Sigmoid colon (tissue), 7 donors: ENCODE measurements at regions of chr6 and their contacts with region 1.

Region 1: DNA sequence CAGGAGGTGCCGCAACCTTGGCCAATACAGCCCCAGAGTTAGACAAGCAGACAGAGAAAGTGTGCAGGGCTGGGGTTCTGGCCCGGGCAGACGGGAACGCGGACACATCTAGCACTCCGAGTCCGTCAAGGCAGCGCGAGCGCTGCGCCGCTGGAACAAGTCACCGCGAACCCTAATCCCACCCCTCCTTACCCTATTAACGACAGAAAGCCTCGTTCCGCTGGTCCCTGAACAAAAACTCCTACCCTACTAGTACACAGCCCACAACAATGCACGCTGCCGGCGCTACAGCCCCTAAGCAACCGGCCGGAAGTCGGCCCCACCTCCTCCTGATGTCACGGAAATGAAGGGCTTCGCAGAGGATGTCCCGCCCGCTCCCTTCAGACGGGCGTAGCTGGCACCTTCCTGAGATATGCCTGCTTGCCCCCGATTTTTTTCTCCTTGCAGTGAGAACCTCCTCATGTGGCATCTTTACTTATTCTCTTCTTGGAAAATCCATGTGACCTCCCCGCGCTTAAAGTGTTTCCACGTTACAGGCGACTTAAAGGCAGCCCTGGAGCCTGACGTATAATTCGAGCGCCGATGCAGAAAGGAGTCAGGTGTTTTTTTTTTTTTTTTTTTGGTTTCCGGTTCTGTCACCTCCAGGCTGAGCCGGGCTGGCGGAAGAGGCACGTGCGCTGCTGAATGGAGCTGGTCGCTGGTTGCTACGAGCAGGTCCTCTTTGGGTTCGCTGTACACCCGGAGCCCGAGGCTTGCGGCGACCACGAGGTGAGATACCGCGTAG is at the starts of genes C6orf52 and PAK1IP1:
- DNase-seq: peak; percentile 97
- H3K4me3 ChIP-seq: peak within 1 kb of the TSS; percentile 73 to 93 (median 78)
- H3K27ac ChIP-seq: peak within 1 kb of the TSS; percentile 89 to 97 (median 90)
- H3K4me1 ChIP-seq: peaks cover 0 to 31% (median 27%) of the 10 kb centered on the region in 4 donors
- H3K27me3 ChIP-seq: no peaks in the 10 kb centered on the region
- CTCF ChIP-seq: no peak
- EP300 ChIP-seq: peak in 2 of 4 donors; percentile 6 to 38
- POLR2A ChIP-seq: peak; percentile 92 to 93
- total RNA-seq, gene C6orf52: not detected
- total RNA-seq, gene PAK1IP1: 6.6 to 14.6 (median 11.8) TPM

Region 2: GRCh38 chr6:10510592-10511367 is 183.7 kb before region 1 on chr6:
- intact Hi-C with region 1: loop called (anchors 1 kb)
- DNase-seq: peak; percentile 84
- H3K4me3 ChIP-seq: peak overlapping the region in 3 of 4 donors; percentile 5 to 29 (median 19)
- H3K27ac ChIP-seq: peak overlapping the region; percentile 59 to 75 (median 70)
- H3K4me1 ChIP-seq: peaks cover 0 to 17% (median 10%) of the 10 kb centered on the region in 4 donors
- H3K27me3 ChIP-seq: no peaks in the 10 kb centered on the region
- CTCF ChIP-seq: peak; percentile 47 to 75 (median 56)
- EP300 ChIP-seq: no peak
- POLR2A ChIP-seq: no peak

Region 3: GRCh38 chr6:10626154-10626741 is 68.2 kb before region 1 on chr6:
- intact Hi-C with region 1: loop called (anchors 5 kb)
- DNase-seq: no peak
- H3K4me3 ChIP-seq: no peak overlapping the region
- H3K27ac ChIP-seq: peak overlapping the region in 2 of 4 donors; percentile 29 to 36
- H3K4me1 ChIP-seq: peaks cover 0 to 19% (median 11%) of the 10 kb centered on the region in 4 donors
- H3K27me3 ChIP-seq: no peaks in the 10 kb centered on the region
- CTCF ChIP-seq: no peak
- EP300 ChIP-seq: no peak
- POLR2A ChIP-seq: no peak

Region 4: GRCh38 chr6:10722820-10723566 is 28.5 kb after region 1 on chr6 and contains the start of gene TMEM14C:
- intact Hi-C with region 1: loop called (anchors 2 kb)
- DNase-seq: peak; percentile 100
- H3K4me3 ChIP-seq: peak within 1 kb of the TSS; percentile 74 to 85 (median 79)
- H3K27ac ChIP-seq: peak within 1 kb of the TSS; percentile 91 to 94 (median 93)
- H3K4me1 ChIP-seq: peaks cover 0 to 36% (median 28%) of the 10 kb centered on the region in 4 donors
- H3K27me3 ChIP-seq: no peaks in the 10 kb centered on the region
- CTCF ChIP-seq: no peak
- EP300 ChIP-seq: peak in 1 of 4 donors; percentile 15
- POLR2A ChIP-seq: peak; percentile 80 to 87
- total RNA-seq, gene TMEM14C: 115 to 199 (median 170) TPM

Region 5: DNA sequence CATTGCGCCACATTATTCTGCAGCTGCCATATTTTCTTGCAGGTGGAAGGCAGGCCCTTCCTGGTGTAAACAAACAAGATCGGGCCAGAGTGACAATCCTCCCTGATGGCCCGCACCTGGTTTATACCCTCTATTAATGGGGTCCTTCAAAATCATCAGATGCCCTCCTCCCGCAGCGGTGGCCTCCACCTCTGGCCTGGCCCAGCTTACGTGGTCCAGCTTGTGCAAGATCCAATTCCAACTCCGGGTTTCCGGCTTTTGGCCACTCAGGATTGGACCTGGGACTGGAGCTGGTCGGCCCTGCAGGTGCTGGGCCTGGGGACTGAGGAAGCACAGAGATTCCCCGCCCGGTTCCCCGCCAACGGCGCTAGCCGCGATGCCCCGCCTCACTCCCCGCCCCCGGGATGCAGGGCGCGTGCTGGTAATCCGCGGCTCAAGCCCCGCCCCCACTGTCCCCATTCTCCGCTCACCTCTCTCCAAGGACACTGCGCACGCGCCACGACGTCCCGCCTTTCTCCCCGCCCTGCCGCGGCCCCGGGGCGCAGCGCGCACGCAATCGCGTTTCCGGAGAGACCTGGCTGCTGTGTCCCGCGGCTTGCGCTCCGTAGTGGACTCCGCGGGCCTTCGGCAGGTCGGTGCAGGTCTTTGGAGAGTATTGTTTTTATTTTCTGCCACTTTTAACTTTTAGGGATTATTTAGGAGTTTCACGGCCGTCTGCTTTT is 52.9 kb after region 1 on chr6 and contains the start of gene TMEM14B:
- intact Hi-C with region 1: loop called (anchors 2 kb)
- DNase-seq: peak; percentile 100
- H3K4me3 ChIP-seq: peak within 1 kb of the TSS; percentile 48 to 80 (median 59)
- H3K27ac ChIP-seq: peak within 1 kb of the TSS; percentile 76 to 88 (median 79)
- H3K4me1 ChIP-seq: peaks cover 0 to 32% (median 27%) of the 10 kb centered on the region in 4 donors
- H3K27me3 ChIP-seq: no peaks in the 10 kb centered on the region
- CTCF ChIP-seq: no peak
- EP300 ChIP-seq: peak in 1 of 4 donors; percentile 73
- POLR2A ChIP-seq: peak; percentile 61 to 79
- total RNA-seq, gene TMEM14B: 51.5 to 124 (median 98.2) TPM

Region 6: GRCh38 chr6:10800829-10801535 is 106.5 kb after region 1 on chr6:
- intact Hi-C with region 1: loop called (anchors 2 kb)
- DNase-seq: no peak
- H3K4me3 ChIP-seq: no peak overlapping the region
- H3K27ac ChIP-seq: no peak overlapping the region
- H3K4me1 ChIP-seq: no peaks in the 10 kb centered on the region
- H3K27me3 ChIP-seq: no peaks in the 10 kb centered on the region
- CTCF ChIP-seq: peak; percentile 60 to 94 (median 88)
- EP300 ChIP-seq: no peak
- POLR2A ChIP-seq: no peak

Region 7: GRCh38 chr6:10873313-10873712 is 178.8 kb after region 1 on chr6:
- intact Hi-C with region 1: no loop called
- DNase-seq: no peak
- H3K4me3 ChIP-seq: no peak overlapping the region
- H3K27ac ChIP-seq: no peak overlapping the region
- H3K4me1 ChIP-seq: no peaks in the 10 kb centered on the region
- H3K27me3 ChIP-seq: no peaks in the 10 kb centered on the region
- CTCF ChIP-seq: no peak
- EP300 ChIP-seq: no peak
- POLR2A ChIP-seq: no peak

Region 8: GRCh38 chr6:10977231-10977968 is 282.9 kb after region 1 on chr6:
- intact Hi-C with region 1: no loop called
- DNase-seq: no peak
- H3K4me3 ChIP-seq: no peak overlapping the region
- H3K27ac ChIP-seq: no peak overlapping the region
- H3K4me1 ChIP-seq: no peaks in the 10 kb centered on the region
- H3K27me3 ChIP-seq: no peaks in the 10 kb centered on the region
- CTCF ChIP-seq: no peak
- EP300 ChIP-seq: no peak
- POLR2A ChIP-seq: no peak

Region 9: GRCh38 chr6:11050731-11051130 is 356.2 kb after region 1 on chr6:
- intact Hi-C with region 1: no loop called
- DNase-seq: no peak
- H3K4me3 ChIP-seq: no peak overlapping the region
- H3K27ac ChIP-seq: no peak overlapping the region
- H3K4me1 ChIP-seq: no peaks in the 10 kb centered on the region
- H3K27me3 ChIP-seq: peaks cover 2 to 50% (median 25%) of the 10 kb centered on the region in 3 donors
- CTCF ChIP-seq: no peak
- EP300 ChIP-seq: no peak
- POLR2A ChIP-seq: no peak